ENCODE measurements at regions of chr2 and their contacts with region 1.

Region 1: GRCh38 chr2:119879502-119879901 is 119.8 kb downstream of the PTPN4 start:
- DNase-seq: no peak
- ATAC-seq: no peak
- H3K4me3 ChIP-seq: no peak overlapping the region
- H3K4me3 Mint-ChIP-seq: no peak overlapping the region
- H3K27ac ChIP-seq: no peak overlapping the region
- H3K27ac Mint-ChIP-seq: peak overlapping the region in 3 of 9 donors; percentile 17 to 59 (median 58)
- H3K4me1 ChIP-seq: peaks cover 0 to 14% of the 10 kb centered on the region in 2 donors
- H3K4me1 Mint-ChIP-seq: peaks cover 6 to 52% (median 44%) of the 10 kb centered on the region in 7 donors
- H3K27me3 ChIP-seq: no peaks in the 10 kb centered on the region
- H3K27me3 Mint-ChIP-seq: no peaks in the 10 kb centered on the region

Region 2: GRCh38 chr2:119862127-119862889 is 17.2 kb before region 1 on chr2:
- CTCF ChIA-PET with region 1: interaction called, 3 read pairs
- POLR2A ChIA-PET with region 1: no interaction called
- intact Hi-C with region 1: loop called in 1 of 2 experiments (anchors 2 kb)
- DNase-seq: no peak
- ATAC-seq: no peak
- H3K4me3 ChIP-seq: no peak overlapping the region
- H3K4me3 Mint-ChIP-seq: peak overlapping the region in 2 of 10 donors; percentile 36 to 55
- H3K27ac ChIP-seq: no peak overlapping the region
- H3K27ac Mint-ChIP-seq: peak overlapping the region in 2 of 9 donors; percentile 37 to 79
- H3K4me1 ChIP-seq: peaks cover 14 to 15% of the 10 kb centered on the region in 2 donors
- H3K4me1 Mint-ChIP-seq: peaks cover 36 to 91% (median 84%) of the 10 kb centered on the region in 7 donors
- H3K27me3 ChIP-seq: no peaks in the 10 kb centered on the region
- H3K27me3 Mint-ChIP-seq: no peaks in the 10 kb centered on the region

Measured in naive thymus-derived CD4-positive, alpha-beta T cell (primary cell).